ENCODE measurements at regions of chr2 and their contacts with region 1.

Region 1: DNA sequence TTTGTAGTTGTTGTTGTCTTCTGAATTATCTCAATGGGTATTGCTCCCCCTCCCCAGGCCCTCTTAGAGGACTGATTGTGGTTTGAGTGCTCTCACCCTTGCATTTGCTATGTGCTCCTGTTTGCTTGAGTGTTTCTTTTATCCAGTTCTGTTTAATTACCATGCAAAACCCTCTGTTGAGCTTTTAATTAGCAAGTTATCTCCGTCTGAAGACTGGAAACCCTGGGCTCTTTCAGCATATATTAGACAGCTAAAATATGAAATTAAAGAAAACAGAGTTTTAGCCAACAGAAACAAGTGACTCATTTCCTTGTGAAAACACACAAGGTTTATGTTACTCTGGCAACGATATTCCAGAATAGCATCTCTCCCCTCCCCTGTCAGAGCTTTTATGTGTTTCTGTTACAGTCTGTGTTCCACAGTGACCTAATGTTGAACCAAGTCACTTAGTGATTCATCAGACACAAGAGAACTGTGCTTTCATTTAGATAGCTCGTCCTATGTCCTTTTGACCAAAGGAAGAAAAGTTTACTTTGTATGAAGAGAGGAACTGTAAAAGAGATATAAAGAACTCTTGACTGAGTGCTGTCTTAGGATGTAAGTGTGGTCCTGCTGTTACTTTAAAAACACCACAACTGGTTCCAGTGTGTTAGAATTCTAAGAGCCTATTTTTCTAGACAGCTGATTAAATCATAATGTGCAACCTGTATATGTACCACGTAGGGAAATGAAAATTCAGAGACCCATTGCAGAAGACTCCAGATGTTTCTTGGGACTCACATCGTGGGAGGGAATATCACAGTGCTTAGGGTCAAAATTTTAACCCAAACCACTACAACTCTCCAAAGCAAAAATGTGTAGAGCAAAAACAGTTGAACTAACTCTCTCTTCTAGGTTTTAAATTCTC is 172.8 kb upstream of the RBMS1 start:
- DNase-seq: peak in 2 of 9 donors; percentile 1 to 10
- ATAC-seq: peak; percentile 89
- H3K4me3 ChIP-seq: no peak overlapping the region
- H3K4me3 Mint-ChIP-seq: peak overlapping the region in 5 of 10 donors; percentile 2 to 35 (median 2)
- H3K27ac ChIP-seq: no peak overlapping the region
- H3K27ac Mint-ChIP-seq: peak overlapping the region in 4 of 9 donors; percentile 7 to 64 (median 39)
- H3K4me1 ChIP-seq: peaks cover 0 to 8% of the 10 kb centered on the region in 2 donors
- H3K4me1 Mint-ChIP-seq: peaks cover 4 to 19% (median 18%) of the 10 kb centered on the region in 7 donors
- H3K27me3 ChIP-seq: no peaks in the 10 kb centered on the region
- H3K27me3 Mint-ChIP-seq: no peaks in the 10 kb centered on the region

Region 2: GRCh38 chr2:160417745-160418397 is 248.5 kb before region 1 on chr2:
- CTCF ChIA-PET with region 1: no interaction called
- POLR2A ChIA-PET with region 1: no interaction called
- intact Hi-C with region 1: loop called in 1 of 2 experiments (anchors 5 kb)
- DNase-seq: peak in 4 of 9 donors; percentile 31 to 76 (median 56)
- ATAC-seq: peak; percentile 84
- H3K4me3 ChIP-seq: no peak overlapping the region
- H3K4me3 Mint-ChIP-seq: peak overlapping the region in 6 of 10 donors; percentile 7 to 52 (median 36)
- H3K27ac ChIP-seq: peak overlapping the region; percentile 43
- H3K27ac Mint-ChIP-seq: peak overlapping the region; percentile 36 to 90 (median 75)
- H3K4me1 ChIP-seq: peaks cover 10 to 31% of the 10 kb centered on the region in 2 donors
- H3K4me1 Mint-ChIP-seq: peaks cover 34 to 88% (median 72%) of the 10 kb centered on the region in 7 donors
- H3K27me3 ChIP-seq: no peaks in the 10 kb centered on the region
- H3K27me3 Mint-ChIP-seq: peaks cover 0 to 3% (median 0%) of the 10 kb centered on the region in 5 donors

Region 3: DNA sequence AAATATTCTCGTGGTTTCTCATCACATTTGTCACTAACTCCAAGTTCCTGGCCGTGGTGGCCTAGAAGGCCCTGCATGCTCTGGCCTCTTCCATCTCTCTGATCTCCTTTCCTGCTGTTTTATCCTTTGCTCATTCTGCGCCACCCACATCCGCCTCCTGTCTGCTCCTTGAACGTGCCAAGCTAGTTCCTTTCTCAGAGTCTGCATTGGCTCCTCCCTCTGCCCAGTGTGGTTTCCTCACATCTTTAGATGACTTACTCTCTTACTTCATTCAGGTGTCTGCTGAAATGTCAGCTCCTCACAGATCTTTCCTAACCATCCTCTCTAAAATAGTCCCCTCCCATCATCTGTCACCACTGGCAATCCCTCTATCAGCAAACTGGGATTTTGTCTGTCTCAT is 14.2 kb before region 1 on chr2:
- CTCF ChIA-PET with region 1: no interaction called
- POLR2A ChIA-PET with region 1: no interaction called
- intact Hi-C with region 1: loop called in 1 of 2 experiments (anchors 1 kb)
- DNase-seq: peak; percentile 20 to 81 (median 72)
- ATAC-seq: peak; percentile 97
- H3K4me3 ChIP-seq: no peak overlapping the region
- H3K4me3 Mint-ChIP-seq: peak overlapping the region; percentile 13 to 79 (median 52)
- H3K27ac ChIP-seq: no peak overlapping the region
- H3K27ac Mint-ChIP-seq: peak overlapping the region in 8 of 9 donors; percentile 1 to 47 (median 8)
- H3K4me1 ChIP-seq: peaks cover 11 to 22% of the 10 kb centered on the region in 2 donors
- H3K4me1 Mint-ChIP-seq: peaks cover 23 to 45% (median 34%) of the 10 kb centered on the region in 7 donors
- H3K27me3 ChIP-seq: no peaks in the 10 kb centered on the region
- H3K27me3 Mint-ChIP-seq: peaks cover 3 to 10% (median 8%) of the 10 kb centered on the region in 5 donors

Region 4: GRCh38 chr2:160695402-160696086 is 29.1 kb after region 1 on chr2:
- CTCF ChIA-PET with region 1: no interaction called
- POLR2A ChIA-PET with region 1: no interaction called
- intact Hi-C with region 1: no loop called
- DNase-seq: no peak
- ATAC-seq: no peak
- H3K4me3 ChIP-seq: no peak overlapping the region
- H3K4me3 Mint-ChIP-seq: no peak overlapping the region
- H3K27ac ChIP-seq: no peak overlapping the region
- H3K27ac Mint-ChIP-seq: no peak overlapping the region
- H3K4me1 ChIP-seq: no peaks in the 10 kb centered on the region
- H3K4me1 Mint-ChIP-seq: no peaks in the 10 kb centered on the region
- H3K27me3 ChIP-seq: no peaks in the 10 kb centered on the region
- H3K27me3 Mint-ChIP-seq: peaks cover 0 to 4% (median 0%) of the 10 kb centered on the region in 5 donors